Activated T-helper 2 cell treated with anti-CD3 and anti-CD28 coated beads, Interferon-gamma antibody, Interleukin-2, Interleukin-4, amounts not matched to agents 10 μg/mL and 5 μg/mL and 100 μg/mL, durations not matched to agents 14 hours and 24 hours and 36 hours (primary cell): ENCODE measurements at regions of chr10 and their contacts with region 1.

Region 1: GRCh38 chr10:182441-183201 is 47.4 kb downstream of the ZMYND11 start:
- DNase-seq: no peak
- H3K4me3 Mint-ChIP-seq: peak overlapping the region; percentile 5
- H3K27ac Mint-ChIP-seq: peak overlapping the region; percentile 86
- H3K4me1 Mint-ChIP-seq: peaks cover 30% of the 10 kb centered on the region
- H3K27me3 Mint-ChIP-seq: no peaks in the 10 kb centered on the region

Region 2: GRCh38 chr10:135601-136464 is 46.8 kb before region 1 on chr10:
- intact Hi-C with region 1: loop called (anchors 2 kb)
- DNase-seq: peak; percentile 58
- H3K4me3 Mint-ChIP-seq: peak overlapping the region; percentile 90
- H3K27ac Mint-ChIP-seq: peak overlapping the region; percentile 81
- H3K4me1 Mint-ChIP-seq: peaks cover 23% of the 10 kb centered on the region
- H3K27me3 Mint-ChIP-seq: peaks cover 5% of the 10 kb centered on the region

Region 3: DNA sequence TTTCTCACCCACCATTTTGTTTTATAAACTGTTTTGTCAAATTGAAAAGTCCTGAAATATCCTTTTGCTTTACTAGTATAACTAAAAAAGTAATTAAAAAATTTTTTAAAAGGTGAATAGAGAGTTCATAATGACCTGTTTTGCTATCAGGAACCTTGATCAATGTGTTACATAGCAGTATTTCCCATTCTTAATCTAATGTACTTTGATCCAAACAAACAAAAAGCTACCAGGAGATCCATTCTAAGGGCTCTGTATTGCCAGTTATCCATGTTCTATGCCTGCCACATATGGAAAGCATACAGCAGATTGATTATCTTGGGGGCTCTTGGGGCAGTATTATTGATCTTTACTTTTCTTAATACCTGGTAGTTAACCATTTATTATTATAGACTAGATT is 15.2 kb before region 1 on chr10:
- intact Hi-C with region 1: no loop called
- DNase-seq: no peak
- H3K4me3 Mint-ChIP-seq: no peak overlapping the region
- H3K27ac Mint-ChIP-seq: no peak overlapping the region
- H3K4me1 Mint-ChIP-seq: no peaks in the 10 kb centered on the region
- H3K27me3 Mint-ChIP-seq: no peaks in the 10 kb centered on the region

Region 4: GRCh38 chr10:201328-201771 is 18.7 kb after region 1 on chr10:
- intact Hi-C with region 1: loop called (anchors 2 kb)
- DNase-seq: no peak
- H3K4me3 Mint-ChIP-seq: no peak overlapping the region
- H3K27ac Mint-ChIP-seq: no peak overlapping the region
- H3K4me1 Mint-ChIP-seq: peaks cover 8% of the 10 kb centered on the region
- H3K27me3 Mint-ChIP-seq: no peaks in the 10 kb centered on the region

Region 5: GRCh38 chr10:227014-227413 is 44.4 kb after region 1 on chr10:
- intact Hi-C with region 1: loop called (anchors 5 kb)
- DNase-seq: no peak
- H3K4me3 Mint-ChIP-seq: no peak overlapping the region
- H3K27ac Mint-ChIP-seq: no peak overlapping the region
- H3K4me1 Mint-ChIP-seq: peaks cover 7% of the 10 kb centered on the region
- H3K27me3 Mint-ChIP-seq: no peaks in the 10 kb centered on the region

Region 6: GRCh38 chr10:283916-284356 is 101.3 kb after region 1 on chr10:
- intact Hi-C with region 1: loop called (anchors 1 kb)
- DNase-seq: peak; percentile 20
- H3K4me3 Mint-ChIP-seq: no peak overlapping the region
- H3K27ac Mint-ChIP-seq: peak overlapping the region; percentile 66
- H3K4me1 Mint-ChIP-seq: peaks cover 25% of the 10 kb centered on the region
- H3K27me3 Mint-ChIP-seq: no peaks in the 10 kb centered on the region

Region 7: DNA sequence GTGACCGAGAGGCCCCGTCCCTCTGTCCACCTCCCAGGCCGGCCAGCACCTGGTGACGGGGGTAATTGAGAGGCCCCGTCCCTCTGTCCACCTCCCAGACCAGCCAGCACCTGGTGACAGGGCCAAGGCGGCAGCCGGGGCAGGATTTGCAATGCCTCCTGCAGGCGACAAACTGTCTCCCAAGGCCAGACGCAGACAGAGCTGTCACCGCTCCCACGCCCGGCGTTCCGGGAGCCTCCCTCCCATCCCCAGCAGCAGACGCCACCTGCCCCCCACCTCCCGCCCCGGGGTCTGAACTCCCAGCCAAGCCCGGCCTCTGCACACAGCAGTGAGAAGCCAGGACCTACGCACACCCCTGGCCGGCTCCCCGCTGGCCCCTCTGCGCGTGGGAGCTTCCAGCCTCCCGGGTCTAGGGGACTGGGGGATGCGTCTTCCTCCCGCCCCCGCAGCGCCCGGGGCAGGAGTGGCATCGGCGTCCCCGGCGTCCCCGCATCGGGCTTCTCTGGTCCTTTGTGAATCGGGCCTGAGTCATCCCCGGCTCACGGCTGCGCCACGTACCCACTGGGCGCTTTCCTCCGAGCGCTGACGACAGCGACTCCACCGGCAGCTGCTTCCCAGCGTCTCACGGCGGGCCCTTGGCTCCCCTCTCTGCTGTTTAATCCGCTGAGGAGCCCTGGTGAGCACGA is 601.9 kb after region 1 on chr10:
- intact Hi-C with region 1: no loop called
- DNase-seq: no peak
- H3K4me3 Mint-ChIP-seq: no peak overlapping the region
- H3K27ac Mint-ChIP-seq: no peak overlapping the region
- H3K4me1 Mint-ChIP-seq: no peaks in the 10 kb centered on the region
- H3K27me3 Mint-ChIP-seq: peaks cover 4% of the 10 kb centered on the region

Region 8: GRCh38 chr10:870564-871166 is 688.0 kb after region 1 on chr10:
- intact Hi-C with region 1: no loop called
- DNase-seq: no peak
- H3K4me3 Mint-ChIP-seq: no peak overlapping the region
- H3K27ac Mint-ChIP-seq: peak overlapping the region; percentile 48
- H3K4me1 Mint-ChIP-seq: peaks cover 26% of the 10 kb centered on the region
- H3K27me3 Mint-ChIP-seq: no peaks in the 10 kb centered on the region